Activated naive CD4-positive, alpha-beta T cell treated with anti-CD3 and anti-CD28 coated beads for 36 hours (primary cell): ENCODE measurements at regions of chr7 and their contacts with region 1.

Region 1: DNA sequence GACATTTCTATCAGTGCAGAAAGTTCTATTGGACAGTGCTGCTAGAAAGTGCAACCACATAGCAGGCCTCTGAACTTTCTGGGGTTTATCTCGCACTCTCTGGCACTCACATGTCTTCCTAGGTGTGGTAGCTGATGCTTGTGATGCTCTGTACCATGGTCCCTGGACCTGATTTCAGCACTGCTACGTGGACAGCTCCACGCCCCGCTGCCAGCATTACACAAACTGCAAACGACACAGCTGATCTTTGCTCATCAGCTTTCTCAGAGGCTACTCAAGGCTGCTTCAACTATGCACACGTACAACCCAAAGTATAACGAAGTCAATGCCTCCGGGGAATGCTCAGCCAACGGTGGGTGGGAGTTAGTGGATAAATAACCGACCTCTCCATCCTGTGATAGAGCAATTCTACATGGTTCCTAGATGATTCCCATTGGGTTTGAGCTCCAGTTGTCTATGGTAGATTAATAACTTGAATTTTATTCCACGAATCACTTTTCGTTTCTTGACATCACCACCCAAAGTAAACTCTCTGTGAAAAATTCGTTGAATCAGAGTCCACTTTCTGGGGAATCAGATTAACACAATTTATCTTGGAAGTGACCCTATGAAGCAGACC is 302.5 kb downstream of the ACTR3B start:
- DNase-seq: peak; percentile 32
- H3K4me3 Mint-ChIP-seq: no peak overlapping the region
- H3K27ac Mint-ChIP-seq: no peak overlapping the region
- H3K4me1 Mint-ChIP-seq: no peaks in the 10 kb centered on the region
- H3K27me3 Mint-ChIP-seq: no peaks in the 10 kb centered on the region

Region 2: DNA sequence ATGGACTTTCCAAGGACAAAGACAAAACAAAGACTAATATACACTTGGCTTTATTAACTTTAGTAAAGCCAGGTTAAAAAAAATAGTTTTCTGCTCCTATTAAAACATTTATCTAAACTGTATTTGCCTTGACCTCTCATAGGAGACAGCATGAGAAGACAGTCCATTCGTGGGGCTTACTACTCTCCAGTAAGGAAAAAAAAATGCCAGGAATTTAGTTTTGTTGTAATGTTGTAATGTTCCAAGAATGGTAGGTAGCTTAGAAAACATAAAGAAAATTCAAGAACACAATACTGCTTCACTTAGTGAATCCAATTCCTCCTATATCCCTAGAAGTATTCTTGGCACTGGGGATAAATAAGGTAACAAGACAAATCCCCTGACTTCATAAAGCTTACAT is 708.0 kb before region 1 on chr7:
- CTCF ChIA-PET with region 1: no interaction called
- intact Hi-C with region 1: no loop called
- DNase-seq: no peak
- H3K4me3 Mint-ChIP-seq: no peak overlapping the region
- H3K27ac Mint-ChIP-seq: no peak overlapping the region
- H3K4me1 Mint-ChIP-seq: peaks cover 8% of the 10 kb centered on the region
- H3K27me3 Mint-ChIP-seq: no peaks in the 10 kb centered on the region

Region 3: GRCh38 chr7:152876749-152877148 is 185.3 kb before region 1 on chr7:
- CTCF ChIA-PET with region 1: no interaction called
- intact Hi-C with region 1: loop called (anchors 2 kb)
- DNase-seq: no peak
- H3K4me3 Mint-ChIP-seq: no peak overlapping the region
- H3K27ac Mint-ChIP-seq: no peak overlapping the region
- H3K4me1 Mint-ChIP-seq: no peaks in the 10 kb centered on the region
- H3K27me3 Mint-ChIP-seq: no peaks in the 10 kb centered on the region

Region 4: GRCh38 chr7:153022475-153023193 is 39.4 kb before region 1 on chr7:
- CTCF ChIA-PET with region 1: no interaction called
- intact Hi-C with region 1: no loop called
- DNase-seq: no peak
- H3K4me3 Mint-ChIP-seq: no peak overlapping the region
- H3K27ac Mint-ChIP-seq: no peak overlapping the region
- H3K4me1 Mint-ChIP-seq: no peaks in the 10 kb centered on the region
- H3K27me3 Mint-ChIP-seq: no peaks in the 10 kb centered on the region